ENCODE measurements at regions of chr10 and their contacts with region 1.

Region 1: GRCh38 chr10:67520924-67521520 is 175.0 kb downstream of the CTNNA3 start:
- DNase-seq: peak in 1 of 2 donors; percentile 10
- ATAC-seq: peak in 7 of 8 donors; percentile 49 to 84 (median 73)
- H3K4me3 ChIP-seq: no peak overlapping the region
- H3K27ac ChIP-seq: no peak overlapping the region
- H3K4me1 ChIP-seq: peaks cover 0 to 14% (median 0%) of the 10 kb centered on the region in 9 donors
- H3K27me3 ChIP-seq: no peaks in the 10 kb centered on the region
- CTCF ChIP-seq: peak; percentile 27 to 81 (median 71)

Region 2: DNA sequence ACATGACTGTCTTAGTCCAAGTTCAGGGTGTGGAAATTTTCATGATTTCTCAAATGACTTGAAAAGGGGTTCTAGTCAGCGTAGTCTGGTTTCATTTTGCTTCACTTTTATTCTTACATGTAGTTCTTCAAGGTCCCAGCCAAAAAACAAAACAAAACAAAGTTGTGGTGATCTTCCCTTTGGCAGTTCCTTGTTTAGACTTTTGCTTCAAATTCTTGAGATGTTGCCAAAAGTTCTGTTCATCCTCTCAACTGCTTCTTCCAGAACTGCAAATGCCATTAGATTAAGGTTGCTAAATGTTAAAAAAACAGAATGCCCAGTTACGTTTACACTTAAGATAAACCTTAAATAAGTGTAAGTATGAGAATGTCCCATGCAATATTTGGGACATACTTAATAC is 966.0 kb before region 1 on chr10:
- intact Hi-C with region 1: loop called in 1 of 10 experiments (anchors 10 kb)
- DNase-seq: no peak
- ATAC-seq: no peak
- H3K4me3 ChIP-seq: peak overlapping the region in 1 of 10 donors; percentile 1
- H3K27ac ChIP-seq: no peak overlapping the region
- H3K4me1 ChIP-seq: peaks cover 0 to 12% (median 0%) of the 10 kb centered on the region in 9 donors
- H3K27me3 ChIP-seq: no peaks in the 10 kb centered on the region
- CTCF ChIP-seq: no peak

Region 3: DNA sequence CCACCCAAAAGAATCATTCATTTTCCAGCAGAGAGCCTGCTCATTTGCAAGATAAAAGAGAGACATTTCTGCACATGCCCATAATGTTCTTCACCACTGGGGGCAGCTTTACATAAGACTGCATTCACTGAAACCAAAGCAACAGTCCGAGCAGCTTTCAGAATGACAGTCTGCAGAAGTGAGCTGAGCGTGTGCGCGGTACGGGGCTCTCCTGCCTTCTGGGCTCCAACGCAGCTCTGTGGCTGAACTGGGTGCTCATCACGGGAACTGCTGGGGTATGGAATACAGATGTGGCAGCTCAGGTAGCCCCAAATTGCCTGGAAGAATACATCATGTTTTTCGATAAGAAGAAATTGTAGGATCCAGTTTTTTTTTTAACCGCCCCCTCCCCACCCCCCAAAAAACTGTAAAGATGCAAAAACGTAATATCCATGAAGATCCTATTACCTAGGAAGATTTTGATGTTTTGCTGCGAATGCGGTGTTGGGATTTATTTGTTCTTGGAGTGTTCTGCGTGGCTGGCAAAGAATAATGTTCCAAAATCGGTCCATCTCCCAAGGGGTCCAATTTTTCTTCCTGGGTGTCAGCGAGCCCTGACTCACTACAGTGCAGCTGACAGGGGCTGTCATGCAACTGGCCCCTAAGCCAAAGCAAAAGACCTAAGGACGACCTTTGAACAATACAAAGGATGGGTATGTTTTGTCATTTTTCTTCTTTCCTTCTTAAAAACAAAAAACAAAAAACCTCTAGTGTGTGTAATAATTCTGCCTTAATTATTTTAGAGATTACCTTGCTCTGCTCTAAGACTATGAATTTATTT is 594.9 kb before region 1 on chr10 and contains the start of gene LRRTM3:
- intact Hi-C with region 1: loop called in 3 of 10 experiments (anchors 10 kb)
- DNase-seq: peak; percentile 17 to 38
- ATAC-seq: peak; percentile 77 to 96 (median 90)
- H3K4me3 ChIP-seq: peak within 1 kb of the TSS in 2 of 10 donors; percentile 18 to 21
- H3K27ac ChIP-seq: no peak within 1 kb of the TSS
- H3K4me1 ChIP-seq: peaks cover 0 to 14% (median 0%) of the 10 kb centered on the region in 9 donors
- H3K27me3 ChIP-seq: peaks cover 0 to 63% (median 30%) of the 10 kb centered on the region in 7 donors
- CTCF ChIP-seq: peak; percentile 25 to 68 (median 58)
- total RNA-seq, gene LRRTM3: not detected

Region 4: GRCh38 chr10:66931340-66931948 is 589.6 kb before region 1 on chr10:
- intact Hi-C with region 1: loop called in 3 of 10 experiments (anchors 10 kb)
- DNase-seq: no peak
- ATAC-seq: peak in 4 of 8 donors; percentile 31 to 60 (median 44)
- H3K4me3 ChIP-seq: no peak overlapping the region
- H3K27ac ChIP-seq: no peak overlapping the region
- H3K4me1 ChIP-seq: peaks cover 0 to 9% (median 0%) of the 10 kb centered on the region in 9 donors
- H3K27me3 ChIP-seq: peaks cover 0 to 47% (median 28%) of the 10 kb centered on the region in 7 donors
- CTCF ChIP-seq: peak; percentile 56 to 86 (median 83)

Region 5: DNA sequence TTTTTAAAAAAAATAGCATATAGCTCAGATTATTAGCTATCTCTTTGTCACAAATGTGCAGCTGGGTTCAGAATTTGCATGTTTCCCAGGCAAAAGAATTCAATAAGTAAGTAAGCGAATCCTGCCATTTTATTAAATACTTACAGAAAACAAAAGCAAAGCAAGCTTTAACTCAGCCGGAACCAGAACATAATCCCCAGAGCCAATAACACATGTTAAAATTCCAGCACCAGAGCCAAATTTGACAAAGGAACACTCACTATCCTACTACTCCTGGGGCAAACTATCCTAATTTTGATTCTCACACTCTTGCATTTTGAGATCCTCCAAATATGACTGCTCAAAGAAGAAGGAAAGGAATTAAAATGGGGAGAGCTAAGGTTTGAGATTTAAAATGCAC is 562.6 kb before region 1 on chr10:
- intact Hi-C with region 1: loop called in 2 of 10 experiments (anchors 10 kb)
- DNase-seq: no peak
- ATAC-seq: peak in 1 of 8 donors; percentile 37
- H3K4me3 ChIP-seq: peak overlapping the region in 5 of 10 donors; percentile 20 to 31 (median 25)
- H3K27ac ChIP-seq: peak overlapping the region in 2 of 10 donors; percentile 30 to 41
- H3K4me1 ChIP-seq: peaks cover 0 to 19% (median 5%) of the 10 kb centered on the region in 9 donors
- H3K27me3 ChIP-seq: no peaks in the 10 kb centered on the region
- CTCF ChIP-seq: no peak

Region 6: DNA sequence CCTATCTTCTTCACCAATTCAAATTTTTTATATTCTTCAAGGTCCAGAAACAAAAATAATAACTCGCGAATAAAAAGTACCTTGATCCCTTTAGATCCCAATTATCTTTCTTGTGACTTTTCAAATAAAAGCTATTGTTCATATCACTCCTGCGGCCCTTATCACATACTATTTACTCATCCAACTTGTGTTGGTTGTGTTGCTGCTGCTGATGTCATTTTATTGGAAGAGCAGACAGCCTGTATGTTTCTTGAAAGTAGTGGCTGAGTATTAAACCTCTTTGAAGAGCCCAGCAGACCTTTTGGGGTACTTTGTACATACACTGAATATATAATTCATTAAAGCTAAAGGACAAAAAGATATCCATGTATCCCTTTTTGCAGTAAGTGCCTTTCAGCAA is 56.7 kb before region 1 on chr10:
- intact Hi-C with region 1: no loop called
- DNase-seq: no peak
- ATAC-seq: no peak
- H3K4me3 ChIP-seq: no peak overlapping the region
- H3K27ac ChIP-seq: no peak overlapping the region
- H3K4me1 ChIP-seq: peaks cover 0 to 5% (median 0%) of the 10 kb centered on the region in 9 donors
- H3K27me3 ChIP-seq: no peaks in the 10 kb centered on the region
- CTCF ChIP-seq: no peak

Region 7: GRCh38 chr10:67779465-67780203 is 258.6 kb after region 1 on chr10:
- intact Hi-C with region 1: loop called in 2 of 10 experiments (anchors 5 to 10 kb)
- DNase-seq: peak in 1 of 2 donors; percentile 78
- ATAC-seq: peak; percentile 72 to 94 (median 86)
- H3K4me3 ChIP-seq: no peak overlapping the region
- H3K27ac ChIP-seq: no peak overlapping the region
- H3K4me1 ChIP-seq: peaks cover 0 to 18% (median 2%) of the 10 kb centered on the region in 9 donors
- H3K27me3 ChIP-seq: no peaks in the 10 kb centered on the region
- CTCF ChIP-seq: peak; percentile 76 to 90 (median 85)

Measured in heart right ventricle (tissue), 16 donors.